ENCODE measurements at regions of chr13 and their contacts with region 1.

Region 1: DNA sequence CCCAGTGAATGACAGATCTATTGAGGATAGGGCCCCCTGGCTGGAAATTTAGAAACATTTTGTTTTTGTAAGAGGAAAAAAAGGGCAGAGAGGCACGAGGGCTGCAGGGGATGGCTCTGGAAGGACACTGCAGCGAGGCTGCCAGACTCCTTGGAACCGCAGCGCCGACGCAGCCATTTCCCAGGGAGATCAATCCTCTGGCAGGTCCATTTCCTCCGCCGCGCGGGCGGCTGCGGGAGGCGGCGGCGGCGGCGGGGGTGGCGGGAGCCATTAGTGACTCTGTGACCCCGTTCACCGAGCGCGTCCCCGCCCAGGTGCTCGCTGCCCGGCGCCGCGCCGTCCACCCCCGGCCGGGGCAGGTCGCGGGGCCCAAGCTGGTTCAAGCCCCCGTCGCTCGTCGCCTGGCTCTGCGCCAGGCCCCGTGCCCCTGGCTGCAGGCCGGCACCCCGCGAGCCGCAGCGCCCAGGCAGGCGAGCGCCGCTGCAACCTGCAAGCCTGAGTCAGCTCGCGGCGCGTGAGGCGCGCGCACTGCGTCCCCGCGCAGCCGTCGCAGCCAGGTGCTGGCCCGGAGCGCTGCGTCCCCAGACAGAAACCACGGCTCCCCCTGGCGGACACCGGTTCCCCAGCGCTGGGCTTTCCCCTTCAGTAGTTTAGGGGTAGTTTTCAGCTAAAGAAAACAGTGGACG is 192.6 kb downstream of the KATNAL1 start:
- DNase-seq: peak; percentile 92 to 98 (median 95)
- ATAC-seq: peak; percentile 92
- H3K4me3 ChIP-seq: peak overlapping the region; percentile 38
- H3K4me1 ChIP-seq: peaks cover 11% of the 10 kb centered on the region
- CTCF ChIP-seq: peak; percentile 83

Region 2: DNA sequence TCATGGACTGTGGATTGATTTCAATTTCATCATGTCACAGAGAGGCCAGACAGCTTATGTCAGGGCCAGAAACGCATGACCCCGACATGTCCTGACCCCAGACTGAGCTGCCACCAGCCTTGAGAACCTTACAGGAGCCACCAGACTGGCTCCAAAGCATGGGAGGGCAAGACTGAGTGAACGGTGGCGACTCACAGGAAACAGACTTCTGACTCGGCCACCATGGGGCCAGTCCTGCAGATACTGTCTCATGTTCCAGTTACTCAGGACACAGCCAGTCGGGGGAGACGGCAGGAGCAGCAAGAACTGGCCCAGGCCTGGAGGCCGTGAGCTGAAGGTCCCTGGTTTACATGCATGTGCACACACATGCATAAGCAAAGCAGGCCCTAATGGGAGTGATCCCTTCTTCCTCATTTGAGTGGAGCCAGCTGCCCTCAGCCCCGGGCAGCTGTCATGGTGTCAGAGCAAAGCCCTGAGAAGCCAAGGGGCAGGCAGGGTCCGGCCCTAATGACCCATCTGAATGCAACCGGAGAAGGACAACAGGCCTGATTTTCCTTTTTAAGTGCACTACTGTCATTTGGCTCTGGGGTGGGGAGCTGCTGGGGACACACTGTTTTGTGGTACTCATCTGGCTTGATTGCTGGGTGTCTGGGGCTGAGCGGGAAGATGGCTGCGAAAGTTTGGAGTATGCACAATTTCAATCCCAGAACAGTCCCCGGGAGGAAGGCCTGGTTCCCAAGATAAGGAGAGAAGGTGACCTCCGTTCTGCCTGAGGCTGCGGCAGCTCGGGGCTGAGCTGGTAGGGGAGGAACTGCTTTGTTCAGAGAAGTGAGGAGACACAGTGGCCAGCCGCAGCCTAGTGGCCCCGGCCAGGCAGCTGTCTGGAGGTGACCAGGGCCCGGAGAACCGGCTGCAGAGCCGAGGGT is 601.1 kb before region 1 on chr13:
- intact Hi-C with region 1: loop called (anchors 5 to 10 kb)
- DNase-seq: no peak
- ATAC-seq: no peak
- H3K4me3 ChIP-seq: no peak overlapping the region
- H3K4me1 ChIP-seq: no peaks in the 10 kb centered on the region
- CTCF ChIP-seq: no peak

Region 3: GRCh38 chr13:29763436-29764180 is 351.1 kb before region 1 on chr13:
- intact Hi-C with region 1: loop called in 1 of 2 experiments (anchors 10 kb)
- DNase-seq: peak in 1 of 3 donors; percentile 45
- ATAC-seq: peak; percentile 87
- H3K4me3 ChIP-seq: no peak overlapping the region
- H3K4me1 ChIP-seq: no peaks in the 10 kb centered on the region
- CTCF ChIP-seq: no peak

Region 4: GRCh38 chr13:29771247-29771646 is 343.5 kb before region 1 on chr13:
- intact Hi-C with region 1: loop called (anchors 5 to 10 kb)
- DNase-seq: no peak
- ATAC-seq: peak; percentile 84
- H3K4me3 ChIP-seq: no peak overlapping the region
- H3K4me1 ChIP-seq: no peaks in the 10 kb centered on the region
- CTCF ChIP-seq: no peak

Region 5: GRCh38 chr13:29849731-29850223 is 264.9 kb before region 1 on chr13:
- intact Hi-C with region 1: loop called (anchors 5 kb)
- DNase-seq: peak; percentile 65 to 82 (median 78)
- ATAC-seq: peak; percentile 50
- H3K4me3 ChIP-seq: peak overlapping the region; percentile 90
- H3K4me1 ChIP-seq: peaks cover 16% of the 10 kb centered on the region
- CTCF ChIP-seq: no peak

Region 6: DNA sequence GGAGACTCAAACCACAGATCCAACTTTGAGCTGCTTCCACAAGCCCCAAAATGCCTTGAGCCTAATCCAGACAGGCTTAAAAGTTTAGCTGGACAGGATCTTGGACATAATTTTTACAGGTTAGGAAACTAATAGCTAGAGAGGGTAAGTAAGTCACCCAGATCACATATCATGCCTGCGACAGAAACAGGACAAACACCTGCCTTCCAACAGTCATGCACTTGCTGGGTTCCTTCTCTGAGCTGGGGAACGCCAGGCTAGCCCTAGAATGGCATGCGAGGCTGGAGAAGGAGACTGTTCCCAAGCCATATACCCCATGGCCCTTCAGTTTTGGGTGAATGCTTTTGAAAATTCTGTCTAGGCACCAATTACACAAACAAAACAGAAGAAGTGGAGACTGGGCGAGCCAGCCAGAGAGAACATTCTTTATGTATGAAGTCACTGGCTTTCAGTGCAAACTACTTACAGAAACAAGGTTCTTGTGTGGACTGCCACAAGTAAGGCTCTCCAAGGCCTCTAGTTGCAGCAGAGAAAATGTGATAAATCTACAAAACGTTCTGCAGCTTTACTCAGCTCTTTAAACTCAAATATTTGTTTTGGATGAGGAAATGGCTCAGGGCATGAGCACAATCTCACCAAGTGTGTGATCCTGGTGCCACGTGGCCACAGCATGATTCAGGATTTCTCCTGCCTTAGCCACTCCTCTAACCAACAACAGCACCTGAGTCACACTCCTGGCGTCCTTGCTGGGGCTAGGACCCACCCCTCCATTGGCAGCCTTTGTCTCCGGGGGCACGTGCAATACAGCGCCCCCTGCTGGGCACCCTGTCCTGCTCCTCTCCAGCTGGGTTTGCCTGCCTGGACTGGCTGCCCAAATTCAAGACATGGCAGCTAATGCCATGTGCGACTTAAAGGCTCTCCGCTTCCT is 190.9 kb before region 1 on chr13:
- intact Hi-C with region 1: loop called in 1 of 2 experiments (anchors 10 kb)
- DNase-seq: peak; percentile 89 to 90 (median 89)
- ATAC-seq: peak; percentile 91
- H3K4me3 ChIP-seq: no peak overlapping the region
- H3K4me1 ChIP-seq: peaks cover 30% of the 10 kb centered on the region
- CTCF ChIP-seq: peak; percentile 83

Measured in mucosa of descending colon (tissue), 3 donors.